ENCODE measurements at regions of chr2 and their contacts with region 1.

Region 1: GRCh38 chr2:236569573-236569973 is at the start of gene ACKR3:
- DNase-seq: peak; percentile 89
- ATAC-seq: peak; percentile 97
- H3K4me3 Mint-ChIP-seq: peak within 1 kb of the TSS; percentile 52
- H3K27ac Mint-ChIP-seq: peak within 1 kb of the TSS; percentile 65
- H3K4me1 Mint-ChIP-seq: peaks cover 28% of the 10 kb centered on the region
- H3K27me3 Mint-ChIP-seq: peaks cover 11% of the 10 kb centered on the region
- total RNA-seq, gene ACKR3: 1.3 to 3.3 TPM

Region 2: GRCh38 chr2:236485519-236485918 is 84.1 kb before region 1 on chr2:
- CTCF ChIA-PET with region 1: no interaction called
- DNase-seq: no peak
- ATAC-seq: no peak
- H3K4me3 Mint-ChIP-seq: no peak overlapping the region
- H3K27ac Mint-ChIP-seq: no peak overlapping the region
- H3K4me1 Mint-ChIP-seq: no peaks in the 10 kb centered on the region
- H3K27me3 Mint-ChIP-seq: peaks cover 19% of the 10 kb centered on the region

Region 3: DNA sequence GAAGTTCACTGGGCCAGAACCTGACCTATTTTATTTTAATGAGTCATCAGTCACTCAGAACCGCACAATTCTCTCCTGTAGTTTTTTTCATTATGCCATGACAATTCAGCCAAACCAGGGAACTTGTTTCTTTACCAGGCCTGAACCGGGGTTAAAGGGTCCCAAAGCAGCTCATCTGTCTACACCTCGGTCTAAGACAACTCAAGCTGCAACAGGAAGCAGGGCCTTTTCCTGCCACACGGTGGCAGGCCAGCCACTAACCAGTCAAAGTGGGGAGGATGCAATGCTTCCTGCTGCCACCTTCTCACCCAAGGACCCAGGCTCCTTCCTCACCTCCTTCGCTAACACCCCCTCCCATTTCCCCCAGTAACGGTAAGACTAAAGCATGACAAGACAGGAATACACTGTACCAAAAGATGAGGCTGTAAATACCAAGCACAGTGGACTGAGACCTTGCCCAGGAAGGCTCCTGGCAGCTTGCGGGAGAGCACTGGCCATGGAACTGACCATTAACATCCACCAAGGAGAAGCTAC is 56.6 kb before region 1 on chr2:
- CTCF ChIA-PET with region 1: interaction called, 230 read pairs
- DNase-seq: peak; percentile 84
- ATAC-seq: peak; percentile 99
- H3K4me3 Mint-ChIP-seq: no peak overlapping the region
- H3K27ac Mint-ChIP-seq: no peak overlapping the region
- H3K4me1 Mint-ChIP-seq: no peaks in the 10 kb centered on the region
- H3K27me3 Mint-ChIP-seq: peaks cover 26% of the 10 kb centered on the region

Region 4: DNA sequence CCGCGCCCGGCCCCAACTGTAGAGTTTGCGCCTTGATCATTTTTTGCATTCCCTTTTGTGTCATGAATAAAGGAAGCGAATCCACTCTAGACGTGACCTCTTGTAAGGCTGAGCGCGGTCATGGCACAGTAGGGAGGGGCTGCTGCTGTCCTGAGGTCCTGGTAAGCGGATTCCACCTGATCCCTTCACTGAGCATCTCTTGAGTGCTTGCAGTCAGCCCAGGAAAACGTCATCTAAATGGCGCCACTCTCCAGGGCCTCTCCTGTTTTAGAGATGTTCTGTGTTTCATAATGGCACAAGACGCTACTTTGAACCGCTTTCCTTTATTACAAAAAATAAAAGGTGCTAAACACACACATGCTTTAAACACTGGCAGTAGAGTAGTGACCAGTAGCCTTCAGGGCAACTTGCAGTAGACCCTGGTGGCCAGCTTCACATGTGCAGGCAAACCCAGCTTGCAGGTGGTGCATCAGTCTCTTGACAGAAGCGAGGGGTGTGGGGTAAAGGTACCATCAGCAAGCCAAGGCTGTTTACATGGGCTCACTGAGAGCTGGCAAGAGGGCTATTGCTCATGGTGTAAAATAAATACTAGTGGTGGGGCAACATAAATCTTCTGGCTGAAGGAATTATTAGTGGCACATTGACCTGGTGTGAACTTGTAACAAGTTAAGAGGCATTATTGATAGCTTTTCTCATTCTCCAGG is 43.0 kb before region 1 on chr2:
- CTCF ChIA-PET with region 1: interaction called, 19 read pairs
- DNase-seq: no peak
- ATAC-seq: no peak
- H3K4me3 Mint-ChIP-seq: no peak overlapping the region
- H3K27ac Mint-ChIP-seq: no peak overlapping the region
- H3K4me1 Mint-ChIP-seq: no peaks in the 10 kb centered on the region
- H3K27me3 Mint-ChIP-seq: peaks cover 24% of the 10 kb centered on the region

Region 5: GRCh38 chr2:236536727-236537398 is 32.7 kb before region 1 on chr2:
- CTCF ChIA-PET with region 1: interaction called, 44 read pairs
- DNase-seq: peak; percentile 84
- ATAC-seq: peak; percentile 90
- H3K4me3 Mint-ChIP-seq: peak overlapping the region; percentile 89
- H3K27ac Mint-ChIP-seq: peak overlapping the region; percentile 92
- H3K4me1 Mint-ChIP-seq: peaks cover 55% of the 10 kb centered on the region
- H3K27me3 Mint-ChIP-seq: no peaks in the 10 kb centered on the region

Region 6: GRCh38 chr2:236545814-236546480 is 23.6 kb before region 1 on chr2:
- CTCF ChIA-PET with region 1: interaction called, 20 read pairs
- DNase-seq: peak; percentile 71
- ATAC-seq: peak; percentile 61
- H3K4me3 Mint-ChIP-seq: peak overlapping the region; percentile 59
- H3K27ac Mint-ChIP-seq: peak overlapping the region; percentile 95
- H3K4me1 Mint-ChIP-seq: peaks cover 81% of the 10 kb centered on the region
- H3K27me3 Mint-ChIP-seq: no peaks in the 10 kb centered on the region

Region 7: GRCh38 chr2:236558993-236559978 is 10.3 kb before region 1 on chr2:
- CTCF ChIA-PET with region 1: interaction called, 25 read pairs
- DNase-seq: no peak
- ATAC-seq: no peak
- H3K4me3 Mint-ChIP-seq: no peak overlapping the region
- H3K27ac Mint-ChIP-seq: no peak overlapping the region
- H3K4me1 Mint-ChIP-seq: peaks cover 22% of the 10 kb centered on the region
- H3K27me3 Mint-ChIP-seq: no peaks in the 10 kb centered on the region